ENCODE measurements at regions of chr11 and their contacts with region 1.

Region 1: GRCh38 chr11:32052218-32052617 is 38.7 kb upstream of the RCN1 start:
- DNase-seq: peak; percentile 9
- H3K4me3 Mint-ChIP-seq: no peak overlapping the region
- H3K27ac Mint-ChIP-seq: no peak overlapping the region
- H3K4me1 Mint-ChIP-seq: peaks cover 2% of the 10 kb centered on the region
- H3K27me3 Mint-ChIP-seq: peaks cover 26% of the 10 kb centered on the region

Region 2: DNA sequence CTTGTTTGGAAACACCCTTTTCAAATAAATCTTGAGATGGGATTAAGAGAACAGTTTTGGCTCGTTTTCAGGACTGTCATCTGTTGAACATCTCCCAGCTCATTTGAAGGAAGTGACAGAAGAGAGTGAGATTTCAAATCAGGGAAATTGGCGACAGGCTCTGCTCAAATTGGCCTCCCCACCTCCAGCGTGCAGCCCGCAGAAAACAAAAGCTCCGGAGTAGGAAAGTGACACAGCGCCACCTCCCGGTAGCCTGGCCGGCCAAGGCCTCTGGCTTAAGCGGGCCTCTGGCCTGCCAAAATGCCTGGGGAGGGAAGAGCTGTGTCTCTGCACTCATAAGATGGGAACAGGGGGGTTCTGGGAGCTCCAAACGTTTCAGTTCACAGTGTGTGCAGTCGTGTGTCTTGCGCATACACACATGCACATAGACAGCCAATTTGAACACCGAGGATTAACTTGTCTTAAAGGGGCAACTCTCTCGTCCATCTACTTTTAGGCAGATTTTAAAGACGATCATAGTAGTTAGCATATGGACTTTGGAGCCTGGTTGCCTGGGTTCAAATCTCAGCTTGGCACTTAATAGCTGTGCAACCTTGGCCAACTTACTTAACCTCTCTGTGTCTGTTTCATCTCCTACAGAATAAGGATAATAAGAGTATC is 94.0 kb before region 1 on chr11:
- intact Hi-C with region 1: no loop called
- DNase-seq: peak; percentile 44
- H3K4me3 Mint-ChIP-seq: no peak overlapping the region
- H3K27ac Mint-ChIP-seq: no peak overlapping the region
- H3K4me1 Mint-ChIP-seq: peaks cover 3% of the 10 kb centered on the region
- H3K27me3 Mint-ChIP-seq: no peaks in the 10 kb centered on the region

Region 3: GRCh38 chr11:32176223-32176934 is 124.2 kb after region 1 on chr11:
- intact Hi-C with region 1: loop called (anchors 1 kb)
- DNase-seq: peak; percentile 62
- H3K4me3 Mint-ChIP-seq: no peak overlapping the region
- H3K27ac Mint-ChIP-seq: no peak overlapping the region
- H3K4me1 Mint-ChIP-seq: no peaks in the 10 kb centered on the region
- H3K27me3 Mint-ChIP-seq: peaks cover 19% of the 10 kb centered on the region

Region 4: GRCh38 chr11:32297611-32298011 is 245.4 kb after region 1 on chr11:
- intact Hi-C with region 1: loop called (anchors 1 kb)
- DNase-seq: no peak
- H3K4me3 Mint-ChIP-seq: no peak overlapping the region
- H3K27ac Mint-ChIP-seq: no peak overlapping the region
- H3K4me1 Mint-ChIP-seq: peaks cover 4% of the 10 kb centered on the region
- H3K27me3 Mint-ChIP-seq: peaks cover 5% of the 10 kb centered on the region